Left ventricle myocardium superior (tissue), 1 donor: ENCODE measurements at regions of chrX and their contacts with region 1.

Region 1: GRCh38 chrX:103343105-103343504 is 13.1 kb downstream of the TCEAL7 start:
- DNase-seq: no peak
- ATAC-seq: no peak

Region 2: DNA sequence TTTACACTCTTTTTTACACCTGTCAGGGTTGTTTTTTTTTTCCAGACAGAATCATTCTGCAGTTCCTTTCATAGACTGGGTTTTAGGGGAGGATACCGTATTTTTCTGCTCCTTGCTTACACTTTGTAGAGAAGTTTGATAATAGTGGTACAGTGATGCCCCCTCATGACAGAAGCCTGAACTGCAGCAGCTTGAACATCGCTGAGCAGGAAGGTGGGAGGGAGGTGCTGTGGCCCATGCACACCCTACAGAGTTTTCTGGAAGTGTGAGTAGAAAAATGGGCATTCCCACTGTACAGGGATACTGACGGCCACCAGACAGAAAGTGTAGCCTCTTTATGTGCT is 121.6 kb after region 1 on chrX:
- intact Hi-C with region 1: loop called (anchors 2 kb)
- DNase-seq: peak; percentile 67
- ATAC-seq: peak; percentile 94

Region 3: GRCh38 chrX:103483720-103484119 is 140.6 kb after region 1 on chrX:
- intact Hi-C with region 1: no loop called
- DNase-seq: no peak
- ATAC-seq: no peak

Region 4: GRCh38 chrX:103789004-103789403 is 445.9 kb after region 1 on chrX:
- intact Hi-C with region 1: no loop called
- DNase-seq: no peak
- ATAC-seq: no peak